Caco-2 (cell line): ENCODE measurements at regions of chr12 and their contacts with region 1.

Region 1: DNA sequence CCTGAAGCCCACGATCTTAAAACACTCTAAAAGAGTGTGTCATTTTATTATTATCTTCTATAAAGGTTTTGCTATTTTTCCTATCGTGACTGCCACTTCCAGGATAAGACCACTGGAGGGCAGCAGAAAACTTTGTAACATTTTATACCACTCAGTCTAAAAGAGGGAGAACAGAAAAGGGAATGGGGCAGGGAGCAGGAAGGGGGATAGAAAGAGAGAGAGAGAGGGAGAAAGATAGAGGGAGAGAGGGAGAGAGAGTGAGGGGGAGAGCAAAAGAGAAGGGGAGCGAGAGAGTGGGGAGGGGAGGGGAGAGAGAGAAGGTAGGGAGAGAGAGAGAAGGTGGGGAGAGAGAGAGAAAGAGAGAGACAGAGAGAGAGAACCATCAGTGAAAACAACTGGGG is 2.0 kb upstream of the ART4 start:
- DNase-seq: peak; percentile 53 to 70
- H3K4me3 ChIP-seq: no peak overlapping the region
- H3K4me3 Mint-ChIP-seq: no peak overlapping the region
- H3K27ac Mint-ChIP-seq: no peak overlapping the region
- H3K4me1 ChIP-seq: peaks cover 32% of the 10 kb centered on the region
- H3K4me1 Mint-ChIP-seq: peaks cover 19% of the 10 kb centered on the region
- H3K27me3 ChIP-seq: no peaks in the 10 kb centered on the region
- H3K27me3 Mint-ChIP-seq: peaks cover 2% of the 10 kb centered on the region
- CTCF ChIP-seq: peak; percentile 80 to 89

Region 2: DNA sequence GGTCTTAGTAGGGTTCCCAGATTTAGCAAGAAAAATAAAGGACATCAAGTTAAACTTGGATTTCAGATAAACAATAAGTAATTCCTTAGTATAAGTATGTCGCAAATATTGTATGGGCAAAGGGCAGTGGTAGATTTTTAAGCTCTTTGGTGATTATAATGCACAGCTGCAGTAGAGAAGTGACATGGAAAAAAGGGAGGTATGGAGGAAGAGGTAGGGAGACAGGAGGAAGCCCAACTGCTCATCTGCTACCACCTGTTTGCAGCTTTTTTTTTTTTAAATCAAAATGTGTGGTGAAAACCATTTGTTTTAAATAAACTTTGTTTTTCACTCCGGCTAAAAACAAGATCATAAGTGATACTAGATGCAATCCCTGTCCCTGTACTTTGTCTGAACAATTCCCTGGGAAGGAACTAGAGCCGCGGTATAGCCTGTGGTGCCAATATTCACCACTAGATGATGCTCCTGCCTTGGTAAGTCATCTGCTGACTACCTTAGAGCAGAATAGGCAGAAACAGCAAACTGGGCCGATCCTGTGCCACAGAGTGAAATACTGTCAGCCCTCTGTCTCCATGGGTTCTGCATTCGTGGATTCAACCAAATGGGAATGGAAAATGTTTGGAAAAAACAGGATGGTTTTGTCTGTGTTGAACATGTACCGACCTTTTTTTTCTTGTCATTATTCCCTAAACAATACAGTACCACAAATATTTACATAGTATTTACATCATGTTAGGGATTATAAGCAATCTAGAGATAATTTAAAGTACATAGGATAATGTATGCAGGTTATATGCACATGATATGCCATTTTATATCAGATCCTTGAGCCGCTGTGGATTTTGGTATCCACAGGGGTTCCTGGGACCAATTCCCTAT is 215.3 kb before region 1 on chr12:
- CTCF ChIA-PET with region 1: no interaction called
- POLR2A ChIA-PET with region 1: no interaction called
- intact Hi-C with region 1: loop called (anchors 1 kb)
- DNase-seq: peak; percentile 82 to 89
- H3K4me3 ChIP-seq: no peak overlapping the region
- H3K4me3 Mint-ChIP-seq: no peak overlapping the region
- H3K27ac Mint-ChIP-seq: no peak overlapping the region
- H3K4me1 ChIP-seq: peaks cover 18% of the 10 kb centered on the region
- H3K4me1 Mint-ChIP-seq: peaks cover 27% of the 10 kb centered on the region
- H3K27me3 ChIP-seq: no peaks in the 10 kb centered on the region
- H3K27me3 Mint-ChIP-seq: no peaks in the 10 kb centered on the region
- CTCF ChIP-seq: peak; percentile 98 to 99

Region 3: DNA sequence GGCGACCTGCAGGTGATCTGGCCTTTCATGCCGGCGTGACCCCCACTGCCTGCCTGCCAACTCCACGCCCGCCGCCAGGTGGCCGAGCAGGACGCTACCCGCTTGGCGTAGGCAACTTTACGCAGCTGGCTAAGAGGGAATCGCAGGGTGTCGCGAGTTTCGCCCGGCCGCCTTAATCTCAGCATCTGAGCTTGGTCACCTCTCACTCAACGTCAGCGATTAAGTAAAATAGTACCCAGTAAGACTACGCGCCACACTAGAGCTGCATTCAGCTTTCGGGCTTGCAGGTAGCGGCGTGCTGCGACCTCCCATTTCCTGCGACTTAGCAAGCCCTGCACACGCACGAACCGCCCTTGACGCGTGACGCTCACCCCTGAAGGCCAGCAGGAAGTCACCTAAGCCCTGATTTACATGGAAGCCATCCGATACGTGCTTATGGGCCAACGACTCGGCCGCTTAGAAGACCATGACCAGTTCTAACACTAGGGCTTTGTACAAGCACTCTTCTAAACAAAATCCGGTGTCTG is 75.3 kb before region 1 on chr12:
- CTCF ChIA-PET with region 1: no interaction called
- POLR2A ChIA-PET with region 1: no interaction called
- intact Hi-C with region 1: loop called (anchors 2 kb)
- DNase-seq: peak; percentile 91 to 95
- H3K4me3 ChIP-seq: peak overlapping the region; percentile 96
- H3K4me3 Mint-ChIP-seq: peak overlapping the region; percentile 90
- H3K27ac Mint-ChIP-seq: peak overlapping the region; percentile 96
- H3K4me1 ChIP-seq: peaks cover 13% of the 10 kb centered on the region; the same call in 1 of the 2 replicates
- H3K4me1 Mint-ChIP-seq: peaks cover 20% of the 10 kb centered on the region
- H3K27me3 ChIP-seq: no peaks in the 10 kb centered on the region
- H3K27me3 Mint-ChIP-seq: no peaks in the 10 kb centered on the region
- CTCF ChIP-seq: peak; percentile 93 to 98

Region 4: DNA sequence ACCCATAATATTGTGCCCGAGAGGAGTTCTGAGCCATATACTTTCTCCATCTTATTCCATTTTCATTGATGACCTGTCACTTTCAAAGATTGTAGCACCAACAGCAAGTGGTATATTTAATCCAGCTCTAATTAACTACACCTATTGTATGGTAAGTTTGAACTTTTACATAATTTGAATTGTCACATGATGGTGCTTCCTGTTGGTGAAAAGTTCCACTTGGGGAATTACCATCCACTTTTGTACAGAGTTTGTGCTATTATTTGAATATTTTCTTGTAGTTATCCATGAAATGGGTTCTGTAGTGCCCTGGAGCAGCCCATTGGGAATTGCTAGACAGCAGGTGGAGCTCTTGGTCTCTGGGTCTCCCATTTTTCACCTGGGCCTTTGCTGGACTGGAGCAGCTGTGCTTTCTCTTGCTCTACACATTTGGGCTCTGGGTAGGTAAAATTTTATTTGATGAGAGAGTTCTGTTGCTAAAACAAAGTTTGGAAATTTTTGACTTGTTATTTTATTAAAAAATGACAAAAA is 34.3 kb before region 1 on chr12:
- CTCF ChIA-PET with region 1: no interaction called
- POLR2A ChIA-PET with region 1: no interaction called
- intact Hi-C with region 1: loop called (anchors 1 kb)
- DNase-seq: peak; percentile 63 to 70
- H3K4me3 ChIP-seq: no peak overlapping the region
- H3K4me3 Mint-ChIP-seq: no peak overlapping the region
- H3K27ac Mint-ChIP-seq: no peak overlapping the region
- H3K4me1 ChIP-seq: no peaks in the 10 kb centered on the region
- H3K4me1 Mint-ChIP-seq: no peaks in the 10 kb centered on the region
- H3K27me3 ChIP-seq: no peaks in the 10 kb centered on the region
- H3K27me3 Mint-ChIP-seq: peaks cover 7% of the 10 kb centered on the region
- CTCF ChIP-seq: peak; percentile 65 to 85

Region 5: DNA sequence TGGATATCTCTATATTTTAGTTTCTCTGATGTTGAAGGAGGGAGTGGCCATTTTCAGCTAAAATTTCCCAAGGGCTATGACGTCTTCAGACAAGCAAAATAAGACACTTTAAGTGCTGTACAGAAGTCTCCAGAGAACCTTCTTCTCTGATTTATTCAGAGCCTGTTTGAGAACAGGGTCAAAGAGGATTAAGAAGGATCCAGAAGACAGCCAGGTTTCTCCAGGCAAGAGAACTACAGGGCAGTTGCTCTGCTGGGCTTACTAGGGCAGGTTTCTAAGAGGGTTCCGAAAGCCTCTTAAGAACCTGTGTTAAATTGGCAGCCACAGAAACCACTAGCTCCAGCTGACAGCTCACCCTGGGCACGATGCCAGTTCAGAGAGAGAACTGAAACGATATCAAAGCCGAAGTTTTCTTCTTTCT is 39.1 kb after region 1 on chr12:
- CTCF ChIA-PET with region 1: no interaction called
- POLR2A ChIA-PET with region 1: no interaction called
- intact Hi-C with region 1: no loop called
- DNase-seq: no peak
- H3K4me3 ChIP-seq: no peak overlapping the region
- H3K4me3 Mint-ChIP-seq: no peak overlapping the region
- H3K27ac Mint-ChIP-seq: no peak overlapping the region
- H3K4me1 ChIP-seq: no peaks in the 10 kb centered on the region
- H3K4me1 Mint-ChIP-seq: no peaks in the 10 kb centered on the region
- H3K27me3 ChIP-seq: no peaks in the 10 kb centered on the region
- H3K27me3 Mint-ChIP-seq: peaks cover 19% of the 10 kb centered on the region
- CTCF ChIP-seq: no peak

Region 6: DNA sequence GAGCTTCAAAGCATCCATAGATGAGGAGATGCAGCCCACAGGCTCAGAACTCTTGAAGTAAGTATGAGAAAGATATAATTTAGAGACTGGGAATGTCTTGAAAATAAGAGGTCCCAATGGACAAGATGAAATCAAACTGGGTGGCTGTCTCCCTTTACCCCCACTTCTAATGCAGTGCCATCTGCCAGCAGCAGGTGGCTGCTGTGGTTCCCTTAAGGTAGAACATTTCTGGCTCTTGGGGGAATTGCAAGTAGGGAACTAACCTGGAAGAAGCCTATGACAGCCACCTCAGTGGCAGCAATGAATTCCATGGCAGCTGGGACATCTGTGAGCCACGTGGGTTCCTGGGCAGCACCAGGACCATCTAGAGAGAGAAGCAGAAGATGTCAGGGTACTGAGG is 92.3 kb after region 1 on chr12:
- CTCF ChIA-PET with region 1: interaction called, 3 read pairs
- POLR2A ChIA-PET with region 1: no interaction called
- intact Hi-C with region 1: loop called (anchors 1 kb)
- DNase-seq: peak in 1 of 2 experiments; percentile 41
- H3K4me3 ChIP-seq: no peak overlapping the region
- H3K4me3 Mint-ChIP-seq: no peak overlapping the region
- H3K27ac Mint-ChIP-seq: no peak overlapping the region
- H3K4me1 ChIP-seq: peaks cover 21% of the 10 kb centered on the region
- H3K4me1 Mint-ChIP-seq: peaks cover 23% of the 10 kb centered on the region
- H3K27me3 ChIP-seq: no peaks in the 10 kb centered on the region
- H3K27me3 Mint-ChIP-seq: no peaks in the 10 kb centered on the region
- CTCF ChIP-seq: peak; percentile 34 to 51

Region 7: GRCh38 chr12:15151161-15152120 is 306.1 kb after region 1 on chr12:
- CTCF ChIA-PET with region 1: no interaction called
- POLR2A ChIA-PET with region 1: no interaction called
- intact Hi-C with region 1: loop called (anchors 2 kb)
- DNase-seq: peak in 1 of 2 experiments; percentile 33
- H3K4me3 ChIP-seq: no peak overlapping the region
- H3K4me3 Mint-ChIP-seq: no peak overlapping the region
- H3K27ac Mint-ChIP-seq: no peak overlapping the region
- H3K4me1 ChIP-seq: no peaks in the 10 kb centered on the region
- H3K4me1 Mint-ChIP-seq: no peaks in the 10 kb centered on the region
- H3K27me3 ChIP-seq: 0 out of 2 replicates have a peak, but pooled peaks cover 1% of the 10 kb centered on the region
- H3K27me3 Mint-ChIP-seq: peaks cover 3% of the 10 kb centered on the region
- CTCF ChIP-seq: peak; percentile 48 to 67

Region 8: DNA sequence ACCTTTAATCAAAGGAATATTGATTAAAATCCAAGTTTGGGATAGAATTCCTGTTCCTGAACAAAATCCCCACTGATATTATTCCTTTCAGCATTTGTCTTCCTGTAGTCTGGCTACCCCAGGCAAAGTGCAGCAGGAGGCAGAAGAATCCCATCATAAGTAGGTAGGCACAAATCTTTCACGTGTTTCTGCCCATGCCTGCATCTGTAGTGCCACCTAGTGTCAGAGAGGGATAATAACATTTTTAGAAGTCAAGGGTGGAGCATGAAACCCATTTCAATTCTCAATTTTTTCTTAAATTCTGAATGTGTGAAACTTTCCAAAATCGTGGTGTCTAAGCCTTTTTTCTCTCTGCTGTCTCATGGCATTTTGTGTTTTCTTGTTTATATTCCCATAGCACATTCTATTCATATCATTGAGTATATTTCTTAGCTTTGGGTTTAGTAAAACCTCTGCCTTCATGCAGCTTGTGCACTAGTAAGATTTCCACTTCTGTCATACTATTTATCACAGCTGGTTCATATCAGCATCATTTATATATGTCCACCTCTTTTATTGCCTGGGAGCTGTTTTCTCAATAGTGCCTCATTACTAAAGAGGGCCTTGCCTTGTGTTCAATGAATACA is 423.7 kb after region 1 on chr12:
- CTCF ChIA-PET with region 1: no interaction called
- POLR2A ChIA-PET with region 1: no interaction called
- intact Hi-C with region 1: loop called (anchors 1 kb)
- DNase-seq: peak; percentile 71 to 72
- H3K4me3 ChIP-seq: no peak overlapping the region
- H3K4me3 Mint-ChIP-seq: no peak overlapping the region
- H3K27ac Mint-ChIP-seq: no peak overlapping the region
- H3K4me1 ChIP-seq: no peaks in the 10 kb centered on the region
- H3K4me1 Mint-ChIP-seq: no peaks in the 10 kb centered on the region
- H3K27me3 ChIP-seq: no peaks in the 10 kb centered on the region
- H3K27me3 Mint-ChIP-seq: no peaks in the 10 kb centered on the region
- CTCF ChIP-seq: peak; percentile 87 to 96